Brain microvascular endothelial cell (primary cell): ENCODE measurements at regions of chr18 and their contacts with region 1.

Region 1: GRCh38 chr18:79378542-79379250 is 17.0 kb upstream of the NFATC1 start:
- DNase-seq: peak; percentile 75
- H3K4me3 ChIP-seq: no peak overlapping the region
- H3K27ac ChIP-seq: no peak overlapping the region
- H3K27me3 ChIP-seq: no peaks in the 10 kb centered on the region
- CTCF ChIP-seq: peak; percentile 98

Region 2: GRCh38 chr18:79092874-79093273 is 285.8 kb before region 1 on chr18:
- in situ Hi-C with region 1: no loop called
- DNase-seq: no peak
- H3K4me3 ChIP-seq: no peak overlapping the region
- H3K27ac ChIP-seq: no peak overlapping the region
- H3K27me3 ChIP-seq: no peaks in the 10 kb centered on the region
- CTCF ChIP-seq: no peak

Region 3: DNA sequence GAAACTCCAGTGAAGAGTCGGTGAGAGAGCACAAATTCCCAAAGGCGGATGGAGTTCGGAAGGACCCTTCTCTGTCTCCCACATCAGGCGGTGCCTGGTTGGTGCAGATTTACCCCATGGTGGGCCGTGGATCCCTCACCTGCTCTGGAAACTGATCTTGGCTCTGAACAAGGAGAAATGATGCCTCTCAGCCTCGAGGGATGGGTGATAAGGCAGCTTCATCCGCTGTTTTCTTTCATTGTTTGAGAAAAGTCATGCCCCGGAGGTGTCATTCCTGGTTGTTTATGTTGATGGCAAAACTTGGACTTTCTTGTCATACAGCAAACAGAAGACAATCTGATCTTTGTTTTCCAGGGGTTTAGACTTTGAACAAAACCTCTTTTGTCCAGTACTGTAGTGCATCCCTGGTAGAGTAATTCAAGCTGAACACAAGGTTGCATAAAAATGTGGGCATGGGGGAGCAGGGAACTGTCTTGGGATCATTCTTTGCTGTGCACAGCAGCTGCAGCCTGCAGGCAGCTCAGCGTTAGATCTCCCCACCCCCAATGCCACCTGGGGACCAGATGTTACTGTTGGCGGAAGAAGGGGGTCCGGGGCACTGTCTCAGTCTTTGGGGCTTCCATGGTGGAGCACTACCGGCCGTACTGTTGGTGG is 98.3 kb after region 1 on chr18:
- in situ Hi-C with region 1: no loop called
- DNase-seq: no peak
- H3K4me3 ChIP-seq: no peak overlapping the region
- H3K27ac ChIP-seq: no peak overlapping the region
- H3K27me3 ChIP-seq: no peaks in the 10 kb centered on the region
- CTCF ChIP-seq: no peak

Region 4: DNA sequence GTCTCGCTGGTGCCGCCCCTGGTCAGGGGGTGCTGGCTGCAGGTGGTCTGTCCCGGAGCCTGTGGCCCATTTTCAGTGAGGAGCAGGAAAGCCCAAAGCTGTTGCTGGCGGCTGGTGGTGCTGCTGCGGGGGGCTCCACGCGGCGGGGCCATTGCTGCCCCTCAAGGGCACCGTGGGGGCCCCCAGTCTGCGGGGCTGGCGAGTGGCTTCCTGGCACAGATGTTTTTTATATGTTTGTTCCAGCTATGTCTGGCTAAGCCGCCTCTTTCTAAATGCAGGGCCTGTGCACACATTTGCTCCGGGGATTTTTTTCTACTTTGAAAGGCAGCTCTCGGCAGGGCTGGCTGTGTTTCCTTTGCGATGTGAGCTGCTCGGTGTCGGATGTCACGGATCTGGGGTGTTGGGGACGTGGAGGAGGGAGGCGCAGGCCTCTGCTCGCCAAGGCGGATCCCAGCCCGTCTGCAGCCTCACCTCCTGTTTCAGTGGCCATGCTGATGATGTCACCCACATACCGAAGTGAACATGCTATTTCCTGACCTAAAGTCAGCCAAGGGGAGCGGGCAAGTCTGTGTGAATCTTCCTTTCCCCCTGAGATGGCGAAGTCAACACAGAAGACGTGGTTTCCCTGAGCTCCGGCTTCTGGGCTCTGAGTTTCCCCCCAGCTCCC is 188.9 kb after region 1 on chr18:
- in situ Hi-C with region 1: no loop called
- DNase-seq: peak; percentile 95
- H3K4me3 ChIP-seq: no peak overlapping the region
- H3K27ac ChIP-seq: peak overlapping the region; percentile 80
- H3K27me3 ChIP-seq: no peaks in the 10 kb centered on the region
- CTCF ChIP-seq: no peak

Region 5: GRCh38 chr18:79616651-79617518 is 238.2 kb after region 1 on chr18:
- in situ Hi-C with region 1: no loop called
- DNase-seq: no peak
- H3K4me3 ChIP-seq: peak overlapping the region; percentile 33
- H3K27ac ChIP-seq: no peak overlapping the region
- H3K27me3 ChIP-seq: no peaks in the 10 kb centered on the region
- CTCF ChIP-seq: no peak

Region 6: DNA sequence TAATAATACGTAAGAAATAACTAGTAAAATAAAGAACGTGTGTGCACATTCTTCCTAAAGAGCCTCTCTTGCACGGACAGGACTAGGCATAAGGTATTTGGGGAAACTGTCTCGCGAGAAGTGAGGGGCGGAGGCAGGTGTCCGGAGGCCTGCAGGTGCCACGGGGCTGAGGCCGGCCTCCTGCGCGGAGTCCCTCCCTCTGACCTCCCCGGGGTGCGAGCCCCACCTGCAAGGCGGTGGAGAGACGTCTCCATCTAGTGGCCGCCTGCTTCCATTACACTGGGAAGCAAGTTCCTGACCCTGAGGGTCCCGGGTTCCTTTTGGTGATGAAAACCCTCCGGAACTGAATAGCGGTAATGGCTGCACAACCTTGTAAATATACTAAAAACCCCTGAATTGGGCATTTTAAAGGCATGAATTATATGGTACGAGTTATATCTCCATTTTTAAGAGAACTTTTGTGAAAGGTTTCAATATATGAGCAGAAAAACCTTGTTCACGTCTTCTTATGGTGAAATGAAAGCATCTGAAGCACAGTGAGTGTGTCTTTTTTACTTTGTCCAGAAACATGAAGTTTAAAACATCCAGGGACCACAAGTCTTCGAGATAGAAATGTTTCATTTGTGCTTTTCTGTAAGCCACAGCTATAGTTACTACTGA is 265.4 kb after region 1 on chr18:
- in situ Hi-C with region 1: loop called (anchors 25 kb)
- DNase-seq: no peak
- H3K4me3 ChIP-seq: no peak overlapping the region
- H3K27ac ChIP-seq: no peak overlapping the region
- H3K27me3 ChIP-seq: peaks cover 10% of the 10 kb centered on the region
- CTCF ChIP-seq: peak; percentile 97